ENCODE measurements at regions of chr5 and their contacts with region 1.

Region 1: GRCh38 chr5:5665225-5666075 is 243.0 kb downstream of the ICE1 start:
- DNase-seq: no peak

Region 2: GRCh38 chr5:4640795-4641194 is 1024.7 kb before region 1 on chr5:
- intact Hi-C with region 1: no loop called
- DNase-seq: no peak

Region 3: DNA sequence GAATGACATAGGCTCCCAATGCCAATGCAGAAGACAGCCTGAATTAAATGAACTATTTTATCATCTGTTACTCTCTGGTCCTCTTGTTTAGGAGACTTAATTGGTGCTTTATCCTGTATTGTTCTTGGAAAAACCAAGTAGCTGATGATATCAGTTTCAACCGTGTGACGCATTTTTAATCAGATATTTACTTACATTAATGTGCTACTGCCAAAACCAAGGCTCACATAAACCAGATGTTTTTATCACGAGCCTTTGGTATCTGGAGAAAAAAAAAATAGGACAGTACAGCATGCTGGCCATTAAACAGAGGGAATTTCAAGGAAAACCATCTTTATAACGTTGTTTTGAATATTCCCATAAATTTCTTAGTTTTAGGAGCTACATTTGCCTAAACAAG is 152.9 kb before region 1 on chr5:
- intact Hi-C with region 1: loop called in 1 of 2 experiments (anchors 10 kb)
- DNase-seq: no peak

Region 4: DNA sequence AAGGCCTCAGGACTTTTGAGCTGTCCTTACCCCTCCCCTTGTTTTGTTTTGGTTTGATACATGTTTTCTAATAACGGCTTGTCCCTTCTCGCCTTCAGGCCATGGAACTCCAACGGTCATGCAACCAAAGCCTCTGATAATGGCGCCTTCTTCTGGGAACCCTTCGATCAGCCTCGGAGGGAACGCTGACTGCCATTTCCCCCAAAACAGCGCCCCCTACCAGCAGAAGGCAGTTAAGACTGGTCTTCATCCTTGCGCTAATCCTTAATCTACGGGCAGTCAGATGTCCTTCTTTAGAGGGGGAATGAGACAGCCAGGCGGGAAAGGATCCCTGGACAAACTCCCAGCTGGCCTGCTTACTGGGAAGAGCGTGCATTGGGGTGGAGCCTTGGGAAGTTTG is 33.6 kb after region 1 on chr5:
- intact Hi-C with region 1: no loop called
- DNase-seq: no peak